SK-N-SH (cell line): ENCODE measurements at regions of chr13 and their contacts with region 1.

Region 1: DNA sequence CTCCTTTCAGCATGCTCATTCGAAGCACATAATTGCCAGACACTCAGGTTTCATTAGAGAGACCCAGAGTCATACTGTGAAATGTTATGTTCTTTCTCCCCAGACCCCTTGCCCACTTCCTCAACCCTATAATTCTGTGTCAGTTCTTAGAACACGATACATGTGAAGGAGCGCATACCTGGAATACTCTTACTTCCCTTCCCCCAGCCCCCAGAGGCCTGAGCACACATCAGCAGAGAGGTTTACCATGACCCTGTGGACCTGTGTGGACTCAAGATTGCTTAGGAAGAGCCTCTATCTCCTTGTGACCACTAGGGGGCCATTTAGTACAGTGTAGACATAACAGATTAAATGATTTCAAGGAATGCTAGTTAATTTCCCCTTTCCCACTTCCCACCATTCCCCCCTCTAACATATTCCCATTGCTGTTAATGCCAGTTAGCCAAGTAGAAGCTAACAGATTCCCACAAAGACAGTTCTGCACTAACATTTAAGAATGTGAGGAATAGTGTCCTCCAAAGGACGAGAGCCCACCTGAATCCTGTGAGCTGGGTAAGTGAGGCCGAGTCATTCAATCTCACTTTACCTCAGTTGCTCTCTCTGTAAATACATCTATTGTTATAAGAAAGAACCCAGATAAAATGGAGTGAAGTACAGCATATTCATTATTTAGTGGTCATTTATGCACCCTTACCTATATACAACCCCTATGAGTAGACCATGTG is 154.2 kb upstream of the MAB21L1 start:
- DNase-seq: peak; percentile 36
- H3K4me3 ChIP-seq: no peak overlapping the region
- H3K27ac ChIP-seq: peak overlapping the region in 1 of 2 experiments; percentile 40; a peak in 2 of 4 replicates
- H3K4me1 ChIP-seq: peaks cover 4 to 6% of the 10 kb centered on the region in 2 experiments; a peak in 2 of 4 replicates
- H3K27me3 ChIP-seq: no peaks in the 10 kb centered on the region
- CTCF ChIP-seq: peak; percentile 84
- EP300 ChIP-seq: no peak
- RAD21 ChIP-seq: peak; percentile 64

Region 2: DNA sequence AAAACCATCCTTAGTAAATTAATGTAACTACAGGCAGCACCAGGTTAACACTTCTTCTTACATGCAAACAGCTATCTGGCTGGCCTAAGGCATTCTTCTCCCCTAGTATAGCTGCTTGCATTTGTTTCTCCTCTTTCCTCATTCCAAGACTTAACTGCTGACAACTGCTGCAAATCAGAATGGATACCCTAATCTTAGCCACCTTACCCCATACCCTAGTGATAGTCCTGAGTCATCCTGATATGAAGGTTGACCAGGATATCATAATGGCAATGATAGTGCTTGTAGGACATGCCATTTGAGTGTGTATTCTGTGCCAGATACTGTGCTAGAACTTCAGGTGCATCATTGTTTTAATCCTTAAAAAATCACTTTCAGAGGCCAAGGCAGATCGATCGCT is 16.0 kb before region 1 on chr13:
- CTCF ChIA-PET with region 1: interaction called, 11 read pairs
- POLR2A ChIA-PET with region 1: no interaction called
- DNase-seq: no peak
- H3K4me3 ChIP-seq: no peak overlapping the region
- H3K27ac ChIP-seq: no peak overlapping the region
- H3K4me1 ChIP-seq: peaks cover 0 to 15% of the 10 kb centered on the region in 2 experiments; a peak in 2 of 4 replicates
- H3K27me3 ChIP-seq: no peaks in the 10 kb centered on the region
- CTCF ChIP-seq: no peak
- EP300 ChIP-seq: no peak
- RAD21 ChIP-seq: no peak

Region 3: GRCh38 chr13:35648201-35648600 is 17.5 kb after region 1 on chr13:
- CTCF ChIA-PET with region 1: interaction called, 18 read pairs
- POLR2A ChIA-PET with region 1: no interaction called
- DNase-seq: no peak
- H3K4me3 ChIP-seq: no peak overlapping the region
- H3K27ac ChIP-seq: peak overlapping the region in 1 of 2 experiments; percentile 20; a peak in 1 of 4 replicates
- H3K4me1 ChIP-seq: peaks cover 0 to 3% of the 10 kb centered on the region in 2 experiments; a peak in 1 of 4 replicates
- H3K27me3 ChIP-seq: no peaks in the 10 kb centered on the region
- CTCF ChIP-seq: no peak
- EP300 ChIP-seq: no peak
- RAD21 ChIP-seq: no peak

Region 4: DNA sequence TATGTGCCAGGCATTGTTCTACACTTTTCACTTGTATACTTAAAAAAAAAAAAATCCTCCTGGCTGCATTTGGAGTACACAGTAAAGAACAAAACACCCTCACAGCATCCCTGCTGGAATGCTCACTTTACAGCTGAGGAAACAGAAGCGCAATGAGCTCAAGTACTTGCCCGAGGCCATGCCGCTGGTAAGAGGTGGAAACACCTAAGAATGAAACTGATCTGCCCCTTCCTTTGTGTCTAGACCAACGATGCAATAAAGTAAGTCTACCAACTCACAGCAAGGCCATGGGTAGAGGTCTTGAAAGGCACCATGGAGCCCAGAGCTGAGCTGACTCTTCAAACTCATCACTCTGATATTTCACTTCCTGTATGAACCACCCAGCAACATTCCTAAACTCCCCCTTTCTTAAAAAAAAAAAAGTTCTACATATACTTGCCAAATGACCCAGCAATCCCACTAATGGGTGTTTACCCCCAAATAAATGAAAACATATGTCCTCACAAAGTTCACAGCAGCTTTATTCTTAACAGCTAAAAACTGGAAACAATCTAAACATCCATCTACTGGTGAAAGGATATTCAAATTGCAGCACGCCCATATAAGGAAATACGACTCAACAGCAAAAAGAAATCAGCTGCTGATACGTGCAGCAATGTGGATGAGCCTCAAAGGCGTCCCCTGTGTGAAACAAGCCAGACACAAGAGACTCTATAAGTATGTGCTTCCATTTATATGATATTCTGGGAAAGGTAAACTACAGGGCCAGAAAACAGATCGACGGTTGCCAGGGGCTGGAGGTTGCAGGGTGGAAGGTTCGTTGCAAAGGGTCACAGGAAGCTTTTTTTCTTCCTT is 82.4 kb after region 1 on chr13:
- CTCF ChIA-PET with region 1: interaction called, 11 read pairs
- POLR2A ChIA-PET with region 1: no interaction called
- DNase-seq: peak; percentile 47
- H3K4me3 ChIP-seq: no peak overlapping the region
- H3K27ac ChIP-seq: peak overlapping the region; percentile 69 to 98
- H3K4me1 ChIP-seq: peaks cover 10 to 55% of the 10 kb centered on the region in 2 experiments; a peak in 3 of 4 replicates
- H3K27me3 ChIP-seq: no peaks in the 10 kb centered on the region
- CTCF ChIP-seq: no peak
- EP300 ChIP-seq: peak in 1 of 2 experiments; percentile 30; a peak in 2 of 4 replicates
- RAD21 ChIP-seq: no peak